Activated B cell treated with CpG ODN at 0.5 μM for 24 hours (primary cell): ENCODE measurements at regions of chr7 and their contacts with region 1.

Region 1: GRCh38 chr7:65750511-65751344 is 122.1 kb upstream of the VKORC1L1 start:
- DNase-seq: peak; percentile 83
- ATAC-seq: peak; percentile 99
- H3K4me3 Mint-ChIP-seq: peak overlapping the region; percentile 96
- H3K27ac Mint-ChIP-seq: peak overlapping the region; percentile 94
- H3K4me1 Mint-ChIP-seq: peaks cover 15% of the 10 kb centered on the region
- H3K27me3 Mint-ChIP-seq: no peaks in the 10 kb centered on the region
- CTCF ChIP-seq: no peak

Region 2: DNA sequence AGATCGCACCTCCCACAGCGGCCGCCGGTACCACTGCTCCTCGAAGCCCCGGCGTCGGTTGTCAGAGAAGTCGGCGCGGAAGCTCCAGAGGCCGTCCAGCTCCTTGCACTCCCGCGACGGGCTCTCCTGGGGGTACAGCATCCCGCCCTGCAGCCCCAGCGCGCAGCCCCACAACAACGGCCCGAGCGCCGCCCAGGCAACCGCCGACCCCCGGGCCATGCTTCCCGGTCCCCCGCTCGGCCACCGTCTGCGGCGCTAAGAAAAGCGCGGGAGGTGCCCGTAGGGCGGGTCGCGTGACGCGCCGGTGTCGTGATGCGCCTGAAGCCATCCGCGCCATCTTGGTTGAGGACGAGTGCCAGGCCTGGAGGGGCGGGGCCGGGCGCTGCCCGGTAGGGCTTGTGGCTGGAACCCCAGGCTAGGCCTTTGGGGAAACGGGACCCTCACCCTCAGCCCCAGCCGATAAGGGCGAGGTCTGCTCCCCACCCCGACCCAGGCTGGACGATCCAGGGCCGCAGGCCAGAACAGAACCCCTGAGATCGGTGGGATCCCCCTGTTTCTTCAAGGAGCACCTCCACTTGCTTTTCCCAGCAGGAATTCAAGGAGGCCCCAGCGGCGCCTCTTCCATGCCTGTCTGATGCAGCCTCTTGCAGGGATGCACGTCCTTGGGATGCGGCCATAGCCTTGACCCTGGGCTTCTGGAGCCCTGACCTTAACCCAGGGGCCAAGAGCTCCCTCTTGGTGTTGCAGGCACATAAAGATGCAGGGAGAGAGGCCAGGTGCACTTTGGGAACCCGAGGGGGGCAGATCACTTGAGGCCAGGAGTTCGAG is 231.5 kb after region 1 on chr7 and contains the start of gene GUSB:
- CTCF ChIA-PET with region 1: no interaction called
- POLR2A ChIA-PET with region 1: interaction called, 7 read pairs
- intact Hi-C with region 1: loop called (anchors 1 kb)
- DNase-seq: peak; percentile 85
- ATAC-seq: peak; percentile 94
- H3K4me3 Mint-ChIP-seq: peak within 1 kb of the TSS; percentile 79
- H3K27ac Mint-ChIP-seq: peak within 1 kb of the TSS; percentile 46
- H3K4me1 Mint-ChIP-seq: peaks cover 19% of the 10 kb centered on the region
- H3K27me3 Mint-ChIP-seq: no peaks in the 10 kb centered on the region
- CTCF ChIP-seq: no peak
- total RNA-seq, gene GUSB: 33.6 and 40.8 TPM in 2 replicates

Region 3: GRCh38 chr7:66114793-66115649 is 364.3 kb after region 1 on chr7 and contains the start of gene CRCP:
- CTCF ChIA-PET with region 1: no interaction called
- POLR2A ChIA-PET with region 1: no interaction called
- intact Hi-C with region 1: loop called (anchors 2 kb)
- DNase-seq: peak; percentile 85
- ATAC-seq: peak; percentile 91
- H3K4me3 Mint-ChIP-seq: peak within 1 kb of the TSS; percentile 95
- H3K27ac Mint-ChIP-seq: peak within 1 kb of the TSS; percentile 95
- H3K4me1 Mint-ChIP-seq: peaks cover 44% of the 10 kb centered on the region
- H3K27me3 Mint-ChIP-seq: no peaks in the 10 kb centered on the region
- CTCF ChIP-seq: no peak
- total RNA-seq, gene CRCP: 40.8 and 42.5 TPM in 2 replicates